CD4-positive, alpha-beta memory T cell (primary cell): ENCODE measurements at regions of chr3 and their contacts with region 1.

Region 1: DNA sequence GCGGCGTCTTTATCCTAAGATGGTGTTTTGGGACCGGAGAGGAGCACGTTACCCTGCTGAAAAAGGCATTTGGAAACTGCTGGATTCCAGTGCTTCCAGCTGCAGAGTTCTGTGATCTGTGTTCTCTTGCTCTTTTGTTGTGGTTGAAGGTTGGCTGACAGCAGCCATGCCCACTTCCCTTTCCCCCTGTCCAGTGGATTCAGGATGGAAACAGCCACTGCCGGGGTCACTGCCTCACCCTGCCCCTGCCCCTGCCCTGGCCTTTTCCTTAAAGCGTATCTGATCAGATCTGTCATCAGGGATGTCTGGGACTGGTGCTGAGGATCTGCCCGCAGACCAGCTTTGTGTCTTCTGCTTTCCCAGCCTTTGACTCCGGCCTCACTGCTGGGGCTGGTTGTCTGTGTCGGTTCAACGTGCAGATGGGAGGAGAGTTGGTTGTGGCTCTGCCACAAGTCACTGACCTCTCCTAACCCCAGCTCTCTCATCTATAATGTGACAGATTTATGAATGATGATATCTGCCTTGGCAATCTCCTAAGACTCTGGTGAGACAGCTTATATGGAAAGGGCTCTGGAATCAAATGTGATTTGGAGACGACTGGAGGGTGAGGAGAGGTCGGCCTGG is 219.4 kb upstream of the BHLHE40 start:
- DNase-seq: no peak
- H3K4me3 ChIP-seq: no peak overlapping the region
- H3K4me3 Mint-ChIP-seq: no peak overlapping the region
- H3K27ac ChIP-seq: no peak overlapping the region
- H3K27ac Mint-ChIP-seq: peak overlapping the region in 2 of 7 donors; percentile 19 to 71
- H3K4me1 ChIP-seq: peaks cover 9% of the 10 kb centered on the region
- H3K4me1 Mint-ChIP-seq: peaks cover 2 to 8% (median 4%) of the 10 kb centered on the region in 4 donors
- H3K27me3 ChIP-seq: no peaks in the 10 kb centered on the region
- H3K27me3 Mint-ChIP-seq: no peaks in the 10 kb centered on the region

Region 2: GRCh38 chr3:4314688-4315087 is 445.1 kb before region 1 on chr3:
- CTCF ChIA-PET with region 1: no interaction called
- POLR2A ChIA-PET with region 1: no interaction called
- intact Hi-C with region 1: no loop called
- DNase-seq: no peak
- H3K4me3 ChIP-seq: no peak overlapping the region
- H3K4me3 Mint-ChIP-seq: no peak overlapping the region
- H3K27ac ChIP-seq: no peak overlapping the region
- H3K27ac Mint-ChIP-seq: no peak overlapping the region
- H3K4me1 ChIP-seq: no peaks in the 10 kb centered on the region
- H3K4me1 Mint-ChIP-seq: peaks cover 0 to 12% (median 4%) of the 10 kb centered on the region in 4 donors
- H3K27me3 ChIP-seq: no peaks in the 10 kb centered on the region
- H3K27me3 Mint-ChIP-seq: no peaks in the 10 kb centered on the region

Region 3: GRCh38 chr3:4670352-4670751 is 89.4 kb before region 1 on chr3:
- CTCF ChIA-PET with region 1: no interaction called
- POLR2A ChIA-PET with region 1: no interaction called
- intact Hi-C with region 1: no loop called
- DNase-seq: no peak
- H3K4me3 ChIP-seq: no peak overlapping the region
- H3K4me3 Mint-ChIP-seq: no peak overlapping the region
- H3K27ac ChIP-seq: no peak overlapping the region
- H3K27ac Mint-ChIP-seq: peak overlapping the region in 1 of 7 donors; percentile 25
- H3K4me1 ChIP-seq: no peaks in the 10 kb centered on the region
- H3K4me1 Mint-ChIP-seq: no peaks in the 10 kb centered on the region
- H3K27me3 ChIP-seq: no peaks in the 10 kb centered on the region
- H3K27me3 Mint-ChIP-seq: no peaks in the 10 kb centered on the region

Region 4: GRCh38 chr3:4722103-4722502 is 37.7 kb before region 1 on chr3:
- CTCF ChIA-PET with region 1: no interaction called
- POLR2A ChIA-PET with region 1: no interaction called
- intact Hi-C with region 1: no loop called
- DNase-seq: peak in 4 of 5 donors; percentile 23 to 47 (median 28)
- H3K4me3 ChIP-seq: no peak overlapping the region
- H3K4me3 Mint-ChIP-seq: no peak overlapping the region
- H3K27ac ChIP-seq: no peak overlapping the region
- H3K27ac Mint-ChIP-seq: peak overlapping the region in 5 of 7 donors; percentile 39 to 86 (median 65)
- H3K4me1 ChIP-seq: peaks cover 12% of the 10 kb centered on the region
- H3K4me1 Mint-ChIP-seq: peaks cover 16 to 23% (median 18%) of the 10 kb centered on the region in 4 donors
- H3K27me3 ChIP-seq: no peaks in the 10 kb centered on the region
- H3K27me3 Mint-ChIP-seq: no peaks in the 10 kb centered on the region

Region 5: GRCh38 chr3:4777760-4778518 is 18.1 kb after region 1 on chr3:
- CTCF ChIA-PET with region 1: no interaction called
- POLR2A ChIA-PET with region 1: no interaction called
- intact Hi-C with region 1: loop called (anchors 2 kb)
- DNase-seq: no peak
- H3K4me3 ChIP-seq: no peak overlapping the region
- H3K4me3 Mint-ChIP-seq: no peak overlapping the region
- H3K27ac ChIP-seq: no peak overlapping the region
- H3K27ac Mint-ChIP-seq: peak overlapping the region in 3 of 7 donors; percentile 10 to 60 (median 48)
- H3K4me1 ChIP-seq: peaks cover 7% of the 10 kb centered on the region
- H3K4me1 Mint-ChIP-seq: peaks cover 11 to 29% (median 19%) of the 10 kb centered on the region in 4 donors
- H3K27me3 ChIP-seq: no peaks in the 10 kb centered on the region
- H3K27me3 Mint-ChIP-seq: no peaks in the 10 kb centered on the region

Region 6: DNA sequence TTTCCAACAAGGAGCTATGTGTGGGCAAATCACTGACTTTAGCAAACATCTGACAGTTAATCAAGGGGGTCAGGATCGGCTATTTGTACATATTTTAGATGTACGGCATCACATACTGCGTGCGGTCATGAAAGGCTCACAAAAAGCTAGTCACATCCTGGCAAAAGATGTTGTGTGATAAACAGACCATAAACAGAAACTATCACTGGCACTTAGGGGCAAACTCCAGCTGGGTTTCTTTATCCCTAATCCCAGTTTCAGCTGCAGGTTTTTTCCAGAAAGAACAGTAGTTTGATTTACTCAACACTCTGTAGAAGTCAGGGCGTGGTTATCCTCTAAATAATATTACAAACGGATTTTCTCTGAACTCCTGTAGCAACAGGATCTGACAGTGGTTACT is 107.0 kb after region 1 on chr3:
- CTCF ChIA-PET with region 1: no interaction called
- POLR2A ChIA-PET with region 1: no interaction called
- intact Hi-C with region 1: no loop called
- DNase-seq: peak; percentile 24 to 52 (median 29)
- H3K4me3 ChIP-seq: peak overlapping the region in 1 of 2 donors; percentile 4
- H3K4me3 Mint-ChIP-seq: peak overlapping the region; percentile 82 to 90 (median 87)
- H3K27ac ChIP-seq: peak overlapping the region; percentile 83
- H3K27ac Mint-ChIP-seq: peak overlapping the region; percentile 94 to 98 (median 96)
- H3K4me1 ChIP-seq: peaks cover 36% of the 10 kb centered on the region
- H3K4me1 Mint-ChIP-seq: peaks cover 20 to 41% (median 24%) of the 10 kb centered on the region in 4 donors
- H3K27me3 ChIP-seq: no peaks in the 10 kb centered on the region
- H3K27me3 Mint-ChIP-seq: no peaks in the 10 kb centered on the region